ENCODE measurements at regions of chr6 and their contacts with region 1.

Region 1: DNA sequence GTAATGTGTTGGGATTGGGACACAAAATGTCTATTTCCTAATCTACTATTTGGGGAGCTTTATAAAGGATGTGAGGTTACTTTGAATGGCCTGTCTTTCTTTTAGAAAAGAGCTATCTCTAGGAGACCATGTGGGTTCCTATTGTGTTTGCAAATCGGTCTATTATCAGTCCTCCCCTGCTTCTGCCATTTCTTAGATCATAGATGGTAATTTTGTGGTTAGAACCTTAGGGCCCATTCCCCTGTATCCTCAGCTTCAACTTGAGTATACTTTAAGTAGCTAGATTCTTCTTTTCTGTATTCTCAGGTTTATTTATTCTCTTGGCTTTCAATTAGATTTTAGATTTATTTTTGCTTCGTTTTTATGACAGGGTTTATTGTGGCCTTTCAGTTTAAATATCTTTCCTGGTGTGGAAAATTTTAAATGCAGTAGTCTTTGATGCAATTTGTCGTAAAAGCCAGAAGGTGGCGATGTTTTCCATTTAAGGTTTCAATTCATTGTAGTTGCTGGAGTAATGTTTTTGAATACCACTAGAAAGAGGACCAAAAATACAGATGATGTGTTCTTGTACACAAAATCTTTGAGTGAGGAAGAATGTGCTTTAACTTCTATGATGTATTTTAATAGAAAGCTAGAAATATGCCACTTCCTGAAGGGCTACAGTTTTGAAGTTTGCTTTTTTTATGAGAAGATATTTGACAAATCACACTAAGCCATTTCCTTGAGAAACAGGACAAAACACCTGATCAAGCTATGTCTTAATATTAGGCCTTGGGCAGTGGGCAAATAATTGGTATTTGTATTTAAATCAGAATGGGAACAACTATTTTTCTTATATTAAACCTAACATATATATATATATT is 20.3 kb downstream of the TBPL1 start:
- DNase-seq: no peak
- H3K4me3 Mint-ChIP-seq: no peak overlapping the region
- H3K27ac Mint-ChIP-seq: no peak overlapping the region
- H3K4me1 Mint-ChIP-seq: peaks cover 13% of the 10 kb centered on the region
- H3K27me3 Mint-ChIP-seq: no peaks in the 10 kb centered on the region

Region 2: GRCh38 chr6:133891149-133891926 is 82.0 kb before region 1 on chr6:
- CTCF ChIA-PET with region 1: no interaction called
- POLR2A ChIA-PET with region 1: no interaction called
- DNase-seq: no peak
- H3K4me3 Mint-ChIP-seq: peak overlapping the region; percentile 57
- H3K27ac Mint-ChIP-seq: no peak overlapping the region
- H3K4me1 Mint-ChIP-seq: peaks cover 28% of the 10 kb centered on the region
- H3K27me3 Mint-ChIP-seq: peaks cover 90% of the 10 kb centered on the region

Region 3: DNA sequence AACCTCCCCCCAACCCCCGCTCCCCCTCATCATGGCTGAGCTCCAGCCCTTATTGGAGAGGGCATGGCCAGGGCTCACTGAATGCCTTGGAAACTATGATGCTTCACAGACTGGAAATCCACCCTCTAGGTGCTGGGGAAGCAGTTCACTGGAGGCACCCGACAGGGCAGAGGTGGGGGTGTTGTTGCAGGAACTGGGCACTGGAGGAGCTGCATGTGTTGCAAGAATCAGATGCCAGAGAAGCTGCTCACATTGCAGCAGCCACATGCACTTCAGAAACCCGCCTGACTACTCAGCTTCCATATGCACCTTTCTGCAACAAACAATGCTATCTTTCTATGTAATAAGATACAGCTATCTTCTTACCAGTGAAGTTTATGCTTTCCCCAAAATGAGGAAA is 28.2 kb before region 1 on chr6:
- CTCF ChIA-PET with region 1: interaction called, 13 read pairs
- POLR2A ChIA-PET with region 1: no interaction called
- DNase-seq: no peak
- H3K4me3 Mint-ChIP-seq: no peak overlapping the region
- H3K27ac Mint-ChIP-seq: no peak overlapping the region
- H3K4me1 Mint-ChIP-seq: peaks cover 2% of the 10 kb centered on the region
- H3K27me3 Mint-ChIP-seq: peaks cover 12% of the 10 kb centered on the region

Region 4: DNA sequence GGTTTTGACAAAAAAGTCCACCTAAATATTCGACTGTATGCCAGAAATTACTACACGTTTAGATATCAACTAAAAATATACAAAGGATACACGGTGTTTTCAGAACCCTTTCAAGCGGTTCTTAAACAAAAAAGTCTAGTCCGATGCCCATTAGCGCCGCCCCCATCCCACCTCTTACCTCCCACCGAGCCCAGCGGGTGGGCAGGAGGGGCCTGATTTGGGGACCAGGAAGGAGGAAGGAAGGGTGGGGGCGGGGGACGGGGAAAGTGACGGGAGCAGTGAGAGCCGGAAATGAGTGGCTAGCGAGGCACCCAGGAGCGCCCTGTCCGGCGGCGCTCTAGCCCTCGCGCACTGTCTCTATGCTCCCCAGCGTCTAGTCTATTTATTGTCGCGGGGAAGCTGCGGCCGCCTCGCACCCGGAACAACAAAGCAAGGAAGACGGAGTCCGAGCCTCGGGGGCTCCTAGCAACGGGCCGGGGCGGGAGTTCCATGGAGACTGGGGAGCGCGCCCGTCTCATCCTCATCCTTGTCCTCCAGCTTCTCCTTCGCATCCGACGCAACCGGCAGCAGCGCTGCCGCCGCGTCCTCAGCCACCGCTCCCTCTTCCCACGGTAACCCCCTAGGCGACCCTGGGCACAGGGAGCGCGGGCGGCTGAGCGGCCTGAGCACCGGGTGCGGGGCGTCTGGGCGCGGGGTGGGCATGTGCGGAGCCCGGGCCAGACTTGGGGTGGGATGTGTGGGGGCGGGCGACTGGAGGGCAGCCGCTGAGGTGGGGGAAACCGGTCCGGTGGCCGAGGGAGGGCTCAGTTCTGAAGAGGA is 20.3 kb before region 1 on chr6 and contains the start of gene TBPL1:
- CTCF ChIA-PET with region 1: interaction called, 16 read pairs
- POLR2A ChIA-PET with region 1: interaction called, 12 read pairs
- DNase-seq: peak; percentile 88
- H3K4me3 Mint-ChIP-seq: peak within 1 kb of the TSS; percentile 96
- H3K27ac Mint-ChIP-seq: peak within 1 kb of the TSS; percentile 74
- H3K4me1 Mint-ChIP-seq: peaks cover 39% of the 10 kb centered on the region
- H3K27me3 Mint-ChIP-seq: peaks cover 7% of the 10 kb centered on the region
- total RNA-seq, gene TBPL1: 33.5 to 35.5 TPM

Region 5: DNA sequence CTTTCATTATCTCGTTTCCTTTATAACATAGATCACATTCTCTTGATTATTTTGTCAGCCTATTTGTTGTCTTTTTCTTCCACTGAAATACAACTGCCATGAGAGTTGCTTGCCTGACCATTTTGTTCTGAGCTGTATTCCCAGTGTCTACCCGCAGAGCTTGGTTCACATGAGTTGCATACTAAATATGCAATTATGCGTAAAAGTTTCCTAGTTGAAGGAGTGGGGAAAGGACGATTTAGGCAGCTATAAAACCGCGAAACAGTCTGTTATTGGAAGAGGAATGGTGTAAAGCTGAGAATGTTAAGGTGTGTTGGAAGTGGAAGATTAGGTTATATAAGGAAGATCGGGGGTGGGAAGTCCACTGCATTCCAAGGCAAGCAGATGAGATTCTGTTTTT is 11.5 kb before region 1 on chr6:
- CTCF ChIA-PET with region 1: interaction called, 16 read pairs
- POLR2A ChIA-PET with region 1: interaction called, 3 read pairs
- DNase-seq: no peak
- H3K4me3 Mint-ChIP-seq: no peak overlapping the region
- H3K27ac Mint-ChIP-seq: no peak overlapping the region
- H3K4me1 Mint-ChIP-seq: peaks cover 45% of the 10 kb centered on the region
- H3K27me3 Mint-ChIP-seq: no peaks in the 10 kb centered on the region

Region 6: DNA sequence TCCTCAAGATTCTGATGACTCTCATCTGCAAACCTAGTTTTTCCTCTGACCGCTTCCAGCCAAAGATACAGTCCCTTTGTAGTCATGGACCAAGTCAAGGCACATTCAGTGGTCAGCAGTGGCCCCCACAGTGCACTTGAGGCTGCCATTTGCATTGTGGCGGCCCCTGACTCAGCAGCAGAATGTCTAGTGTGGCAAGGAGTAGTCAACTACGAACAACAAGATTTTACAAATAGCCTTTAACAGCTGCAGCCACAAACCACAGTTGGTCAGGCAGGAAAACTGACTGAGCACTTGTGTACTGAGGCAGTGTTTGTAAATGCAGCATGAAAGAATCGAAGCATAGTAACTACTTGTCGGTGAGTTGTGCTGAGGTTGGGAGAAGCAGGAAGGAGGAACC is 29.5 kb after region 1 on chr6:
- CTCF ChIA-PET with region 1: no interaction called
- POLR2A ChIA-PET with region 1: no interaction called
- DNase-seq: no peak
- H3K4me3 Mint-ChIP-seq: no peak overlapping the region
- H3K27ac Mint-ChIP-seq: no peak overlapping the region
- H3K4me1 Mint-ChIP-seq: no peaks in the 10 kb centered on the region
- H3K27me3 Mint-ChIP-seq: peaks cover 33% of the 10 kb centered on the region

Region 7: GRCh38 chr6:134029495-134030455 is 56.4 kb after region 1 on chr6:
- CTCF ChIA-PET with region 1: no interaction called
- POLR2A ChIA-PET with region 1: no interaction called
- DNase-seq: no peak
- H3K4me3 Mint-ChIP-seq: no peak overlapping the region
- H3K27ac Mint-ChIP-seq: no peak overlapping the region
- H3K4me1 Mint-ChIP-seq: peaks cover 8% of the 10 kb centered on the region
- H3K27me3 Mint-ChIP-seq: peaks cover 7% of the 10 kb centered on the region

Region 8: GRCh38 chr6:134063966-134064445 is 90.7 kb after region 1 on chr6:
- CTCF ChIA-PET with region 1: interaction called, 60 read pairs
- POLR2A ChIA-PET with region 1: no interaction called
- DNase-seq: peak; percentile 64
- H3K4me3 Mint-ChIP-seq: no peak overlapping the region
- H3K27ac Mint-ChIP-seq: no peak overlapping the region
- H3K4me1 Mint-ChIP-seq: no peaks in the 10 kb centered on the region
- H3K27me3 Mint-ChIP-seq: no peaks in the 10 kb centered on the region

Measured in activated CD4-positive, alpha-beta memory T cell treated with anti-CD3 and anti-CD28 coated beads, Interleukin-2, amount 10 ng/mL, durations not matched to agents 7 days and 5 days (primary cell).